AG04450 (cell line): ENCODE measurements at regions of chr3 and their contacts with region 1.

Region 1: GRCh38 chr3:65732051-65732935 is 306.4 kb downstream of the MAGI1 start:
- DNase-seq: peak; percentile 41
- H3K4me3 ChIP-seq: no peak overlapping the region
- H3K27ac ChIP-seq: no peak overlapping the region
- H3K27me3 ChIP-seq: no peaks in the 10 kb centered on the region
- CTCF ChIP-seq: peak; percentile 91

Region 2: GRCh38 chr3:65425880-65426279 is 306.4 kb before region 1 on chr3:
- CTCF ChIA-PET with region 1: interaction called, 12 read pairs
- POLR2A ChIA-PET with region 1: no interaction called
- DNase-seq: no peak
- H3K4me3 ChIP-seq: no peak overlapping the region
- H3K27ac ChIP-seq: no peak overlapping the region
- H3K27me3 ChIP-seq: no peaks in the 10 kb centered on the region
- CTCF ChIP-seq: peak; percentile 73

Region 3: DNA sequence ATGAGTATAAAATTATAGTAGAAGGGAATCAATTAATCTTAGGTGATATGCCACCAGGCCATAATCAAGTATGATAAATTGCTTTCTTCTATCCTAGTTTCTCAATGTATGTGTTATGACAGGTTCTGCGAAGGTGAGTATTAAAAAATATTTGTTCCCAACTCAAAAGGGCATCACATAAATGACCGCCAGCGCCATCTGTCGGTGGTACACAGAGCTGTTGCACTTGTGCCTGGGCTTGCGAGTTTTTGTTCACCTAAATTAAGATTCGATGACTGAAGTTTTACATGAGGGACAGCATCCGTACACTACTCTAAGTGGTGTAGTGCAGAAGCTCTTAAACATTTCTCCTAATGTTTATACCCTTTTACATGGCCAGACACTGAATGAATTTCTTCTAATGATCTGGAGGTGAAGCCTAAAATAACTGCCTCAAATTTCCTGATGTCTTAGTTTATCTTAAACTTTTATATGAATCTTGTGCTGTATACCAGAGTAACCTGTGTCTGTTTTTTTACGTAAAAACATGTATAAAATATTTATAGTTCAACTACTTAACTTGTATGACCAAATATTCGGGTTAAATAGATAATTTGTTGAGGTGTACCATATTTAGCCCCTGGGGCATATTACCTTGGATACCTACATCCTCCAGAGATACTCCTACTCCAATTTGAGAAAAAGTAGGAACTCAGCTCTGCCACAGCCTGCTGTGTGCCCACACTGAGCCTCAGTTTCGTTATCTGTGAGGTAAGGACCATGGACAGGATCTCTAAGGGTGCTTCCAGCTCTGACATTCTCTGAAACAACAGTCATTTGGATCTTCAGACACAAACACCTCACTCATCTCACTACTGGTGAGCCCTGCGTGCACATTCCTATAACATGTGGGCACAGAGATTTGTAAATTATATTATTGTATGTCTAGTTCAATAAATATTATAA is 59.1 kb before region 1 on chr3:
- CTCF ChIA-PET with region 1: interaction called, 11 read pairs
- POLR2A ChIA-PET with region 1: no interaction called
- DNase-seq: peak; percentile 1
- H3K4me3 ChIP-seq: no peak overlapping the region
- H3K27ac ChIP-seq: no peak overlapping the region
- H3K27me3 ChIP-seq: no peaks in the 10 kb centered on the region
- CTCF ChIP-seq: peak; percentile 75

Region 4: DNA sequence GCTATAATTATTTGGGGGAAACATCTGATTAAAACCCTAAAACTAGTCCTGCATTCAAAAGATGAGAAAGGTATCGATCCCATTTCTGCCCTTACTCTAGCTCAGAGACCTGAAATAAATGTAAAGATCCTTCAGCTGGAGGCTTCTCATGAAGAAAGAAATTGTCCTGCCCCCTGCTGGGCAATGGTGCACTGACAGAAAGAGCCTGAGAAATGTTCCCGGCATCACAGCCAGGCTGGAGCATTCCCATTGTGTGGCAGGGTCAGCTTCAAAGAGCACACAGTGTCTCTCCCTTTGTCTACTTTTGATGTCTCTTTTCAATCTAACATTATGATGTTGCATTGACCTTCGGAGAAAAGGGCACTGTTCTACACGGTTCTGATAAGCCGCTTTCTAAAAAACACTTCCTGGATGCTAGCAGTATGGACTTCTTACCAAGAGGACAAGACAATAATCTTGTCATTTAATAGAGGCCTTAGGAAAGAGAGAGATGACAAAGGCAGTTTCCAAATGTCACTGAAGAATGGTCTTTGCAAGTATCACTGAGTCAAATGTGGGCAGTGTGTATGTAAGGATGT is 18.9 kb after region 1 on chr3:
- CTCF ChIA-PET with region 1: interaction called, 10 read pairs
- POLR2A ChIA-PET with region 1: no interaction called
- DNase-seq: no peak
- H3K4me3 ChIP-seq: no peak overlapping the region
- H3K27ac ChIP-seq: no peak overlapping the region
- H3K27me3 ChIP-seq: no peaks in the 10 kb centered on the region
- CTCF ChIP-seq: peak; percentile 78